Psoas muscle (tissue), 8 donors: ENCODE measurements at regions of chr12 and their contacts with region 1.

Region 1: GRCh38 chr12:45388545-45388944 is 172.7 kb downstream of the ANO6 start:
- DNase-seq: no peak
- ATAC-seq: peak in 2 of 4 donors; percentile 59 to 60
- H3K4me3 ChIP-seq: no peak overlapping the region
- H3K27ac ChIP-seq: no peak overlapping the region
- H3K4me1 ChIP-seq: no peaks in the 10 kb centered on the region
- H3K27me3 ChIP-seq: no peaks in the 10 kb centered on the region
- CTCF ChIP-seq: peak; percentile 49

Region 2: GRCh38 chr12:45170456-45171042 is 218.0 kb before region 1 on chr12:
- intact Hi-C with region 1: loop called (anchors 5 to 10 kb)
- DNase-seq: peak; percentile 81 to 86
- ATAC-seq: peak; percentile 73 to 89 (median 84)
- H3K4me3 ChIP-seq: no peak overlapping the region
- H3K27ac ChIP-seq: no peak overlapping the region
- H3K4me1 ChIP-seq: peaks cover 22% of the 10 kb centered on the region
- H3K27me3 ChIP-seq: no peaks in the 10 kb centered on the region
- CTCF ChIP-seq: peak; percentile 95

Region 3: GRCh38 chr12:45226021-45226420 is 162.5 kb before region 1 on chr12:
- intact Hi-C with region 1: no loop called
- DNase-seq: no peak
- ATAC-seq: no peak
- H3K4me3 ChIP-seq: no peak overlapping the region
- H3K27ac ChIP-seq: no peak overlapping the region
- H3K4me1 ChIP-seq: peaks cover 34% of the 10 kb centered on the region
- H3K27me3 ChIP-seq: no peaks in the 10 kb centered on the region
- CTCF ChIP-seq: no peak

Region 4: GRCh38 chr12:45284131-45284901 is 104.2 kb before region 1 on chr12:
- intact Hi-C with region 1: no loop called
- DNase-seq: no peak
- ATAC-seq: no peak
- H3K4me3 ChIP-seq: no peak overlapping the region
- H3K27ac ChIP-seq: no peak overlapping the region
- H3K4me1 ChIP-seq: peaks cover 23% of the 10 kb centered on the region
- H3K27me3 ChIP-seq: no peaks in the 10 kb centered on the region
- CTCF ChIP-seq: no peak

Region 5: GRCh38 chr12:45415393-45415817 is 26.9 kb after region 1 on chr12:
- intact Hi-C with region 1: no loop called
- DNase-seq: peak; percentile 74 to 83
- ATAC-seq: peak; percentile 97 to 99 (median 99)
- H3K4me3 ChIP-seq: no peak overlapping the region
- H3K27ac ChIP-seq: peak overlapping the region; percentile 82
- H3K4me1 ChIP-seq: peaks cover 9% of the 10 kb centered on the region
- H3K27me3 ChIP-seq: no peaks in the 10 kb centered on the region
- CTCF ChIP-seq: no peak